ENCODE measurements at regions of chr6 and their contacts with region 1.

Region 1: DNA sequence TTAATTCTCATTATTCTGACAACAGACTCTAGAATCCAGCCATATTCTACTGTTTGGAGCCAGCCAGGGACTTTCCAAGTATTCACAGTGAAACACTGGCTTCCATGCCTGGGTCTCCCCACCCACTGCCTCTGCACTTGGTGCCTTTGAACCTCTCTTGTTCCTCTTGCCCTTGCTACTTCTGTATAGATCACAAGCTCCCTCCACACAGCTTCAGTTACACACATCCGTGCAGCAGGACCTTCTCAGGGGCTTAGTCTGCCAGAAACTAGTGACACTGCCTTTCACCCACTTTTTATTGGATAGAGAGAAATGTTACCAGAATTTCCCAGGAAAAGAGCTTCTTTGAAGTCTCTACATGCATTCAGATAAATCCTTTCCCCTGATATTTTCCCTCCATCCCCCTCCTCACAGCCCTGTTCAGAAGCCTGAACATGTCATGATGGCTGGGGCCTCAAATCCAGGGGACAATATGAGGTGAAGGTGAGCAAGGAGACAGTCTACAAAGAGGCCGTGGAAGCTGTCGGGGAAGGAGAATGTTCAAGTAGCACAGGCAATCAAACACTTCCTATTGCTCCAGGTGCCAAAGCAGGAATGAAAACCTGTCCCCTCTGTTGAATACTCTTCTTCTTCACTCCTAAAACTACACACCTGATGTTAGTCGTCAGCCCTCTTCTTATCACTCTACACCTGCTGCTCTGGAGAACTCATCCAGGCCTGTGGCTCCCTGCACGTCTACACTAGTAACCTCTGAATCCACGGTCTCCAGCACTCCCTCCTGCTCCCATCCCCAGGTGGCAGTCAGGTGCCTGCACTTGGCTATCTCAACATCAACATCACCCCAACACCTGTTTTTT is 20.2 kb upstream of the HLA-DOA start:
- DNase-seq: no peak
- H3K4me3 ChIP-seq: no peak overlapping the region
- H3K27ac ChIP-seq: peak overlapping the region in 1 of 2 donors; percentile 33
- H3K4me1 ChIP-seq: no peaks in the 10 kb centered on the region
- H3K27me3 ChIP-seq: peaks cover 0 to 10% of the 10 kb centered on the region in 2 donors
- CTCF ChIP-seq: no peak

Region 2: GRCh38 chr6:31502586-31502985 is 1527.0 kb before region 1 on chr6:
- intact Hi-C with region 1: no loop called
- DNase-seq: no peak
- H3K4me3 ChIP-seq: no peak overlapping the region
- H3K27ac ChIP-seq: no peak overlapping the region
- H3K4me1 ChIP-seq: peaks cover 0 to 15% (median 9%) of the 10 kb centered on the region in 4 donors
- H3K27me3 ChIP-seq: no peaks in the 10 kb centered on the region
- CTCF ChIP-seq: no peak

Region 3: DNA sequence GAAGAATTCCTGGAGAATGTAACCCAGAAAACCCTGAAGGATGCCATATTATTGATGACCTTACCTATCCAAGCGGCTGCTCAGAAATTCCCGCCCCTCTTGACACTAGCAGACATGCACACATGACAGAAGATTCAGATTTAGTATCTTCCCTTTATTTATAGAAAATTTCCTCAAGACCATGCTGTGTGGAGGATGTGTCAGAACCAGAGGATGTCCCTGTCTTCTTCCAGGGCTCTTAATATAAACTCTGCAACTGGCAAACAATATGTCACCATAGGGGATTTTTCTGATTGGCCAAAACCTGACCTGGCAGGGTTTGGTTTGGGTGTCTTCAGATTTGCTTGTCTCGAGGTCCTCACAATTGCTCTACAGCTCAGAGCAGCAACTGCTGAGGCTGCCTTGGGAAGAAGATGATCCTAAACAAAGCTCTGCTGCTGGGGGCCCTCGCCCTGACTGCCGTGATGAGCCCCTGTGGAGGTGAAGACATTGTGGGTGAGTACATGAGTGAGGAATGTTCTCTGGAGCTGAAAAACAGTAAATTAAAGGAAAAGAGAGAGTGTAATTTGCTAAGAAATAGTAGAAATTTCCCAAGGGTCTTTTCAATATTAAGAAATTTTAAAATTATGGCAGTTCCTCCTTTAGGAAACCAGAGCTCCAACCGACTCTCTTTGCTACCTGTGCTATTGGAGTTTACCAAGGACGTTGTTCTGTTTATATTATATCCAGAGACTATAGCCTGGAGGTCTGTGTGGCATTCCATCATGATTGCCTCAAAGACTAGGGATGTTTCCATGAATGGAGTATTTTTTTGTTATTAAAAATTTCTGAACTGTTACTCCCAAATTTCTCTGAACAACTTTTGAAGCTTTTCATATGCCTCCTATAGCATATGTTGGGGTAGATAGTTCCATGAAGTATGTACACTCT is 288.3 kb before region 1 on chr6 and contains the start of gene HLA-DQA2:
- intact Hi-C with region 1: no loop called
- DNase-seq: no peak
- H3K4me3 ChIP-seq: no peak within 1 kb of the TSS
- H3K27ac ChIP-seq: no peak within 1 kb of the TSS
- H3K4me1 ChIP-seq: no peaks in the 10 kb centered on the region
- H3K27me3 ChIP-seq: no peaks in the 10 kb centered on the region
- CTCF ChIP-seq: no peak

Region 4: GRCh38 chr6:33075568-33076405 is 46.2 kb after region 1 on chr6 and contains the start of gene HLA-DPB1:
- intact Hi-C with region 1: loop called (anchors 10 kb)
- DNase-seq: no peak
- H3K4me3 ChIP-seq: peak within 1 kb of the TSS; percentile 29 to 37
- H3K27ac ChIP-seq: peak within 1 kb of the TSS in 1 of 2 donors; percentile 42
- H3K4me1 ChIP-seq: peaks cover 0 to 9% (median 4%) of the 10 kb centered on the region in 4 donors
- H3K27me3 ChIP-seq: peaks cover 0 to 11% of the 10 kb centered on the region in 2 donors
- CTCF ChIP-seq: no peak

Region 5: DNA sequence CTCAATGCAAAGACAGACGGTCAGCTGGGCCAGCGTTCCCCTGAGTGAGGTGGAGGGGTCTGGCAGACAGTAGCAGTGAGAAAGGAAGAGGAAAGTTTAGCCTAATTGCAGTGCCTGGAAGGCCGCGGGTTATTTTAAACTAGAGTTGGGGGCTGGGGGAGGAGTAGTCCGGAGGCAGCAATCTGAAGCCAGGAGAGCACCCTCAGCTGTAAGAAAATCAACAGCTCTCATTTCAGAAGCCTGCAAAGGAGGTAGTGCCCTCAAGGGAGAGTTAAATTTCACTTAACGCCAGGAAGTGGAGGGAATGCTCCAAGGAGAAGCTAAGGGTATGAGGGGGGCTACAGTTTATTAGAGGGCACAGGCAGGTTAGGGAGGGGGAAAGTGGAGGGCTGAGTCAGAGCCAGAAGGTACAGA is 205.7 kb after region 1 on chr6:
- intact Hi-C with region 1: no loop called
- DNase-seq: peak in 1 of 2 donors; percentile 27
- H3K4me3 ChIP-seq: no peak overlapping the region
- H3K27ac ChIP-seq: no peak overlapping the region
- H3K4me1 ChIP-seq: no peaks in the 10 kb centered on the region
- H3K27me3 ChIP-seq: peaks cover 0 to 52% of the 10 kb centered on the region in 2 donors
- CTCF ChIP-seq: no peak